Activated CD4-positive, alpha-beta T cell treated with anti-CD3 and anti-CD28 coated beads, Interleukin-2, amount 10 ng/mL, durations not matched to agents 24 days and 14 days (primary cell): ENCODE measurements at regions of chr19 and their contacts with region 1.

Region 1: GRCh38 chr19:56080669-56081401 is 40.3 kb downstream of the ZNF787 start:
- DNase-seq: peak; percentile 88
- H3K4me3 Mint-ChIP-seq: peak overlapping the region; percentile 79
- H3K27ac Mint-ChIP-seq: peak overlapping the region; percentile 58
- H3K4me1 Mint-ChIP-seq: peaks cover 10% of the 10 kb centered on the region
- H3K27me3 Mint-ChIP-seq: peaks cover 4% of the 10 kb centered on the region

Region 2: DNA sequence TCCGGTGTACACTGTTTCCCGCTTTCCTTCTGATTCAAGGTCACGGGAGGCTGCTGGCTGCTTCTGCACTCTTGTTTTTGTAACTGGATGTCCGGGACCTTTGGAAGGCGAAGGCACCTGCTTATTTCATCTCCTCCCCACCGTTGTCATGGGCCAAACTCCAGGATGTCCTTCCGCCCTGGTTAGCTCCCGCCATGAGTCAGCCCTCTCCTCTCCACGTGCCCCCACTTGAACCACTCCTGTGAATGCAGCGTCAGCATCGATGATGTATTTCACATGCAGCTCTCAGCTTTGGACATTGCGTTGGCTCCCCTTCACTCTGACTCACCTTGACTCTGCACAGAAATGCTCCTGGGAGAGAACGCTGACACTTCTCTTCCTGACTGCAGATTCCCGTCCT is 89.4 kb after region 1 on chr19:
- intact Hi-C with region 1: loop called (anchors 1 kb)
- DNase-seq: no peak
- H3K4me3 Mint-ChIP-seq: no peak overlapping the region
- H3K27ac Mint-ChIP-seq: no peak overlapping the region
- H3K4me1 Mint-ChIP-seq: peaks cover 3% of the 10 kb centered on the region
- H3K27me3 Mint-ChIP-seq: no peaks in the 10 kb centered on the region